K562 (cell line): ENCODE measurements at regions of chr10 and their contacts with region 1.

Region 1: GRCh38 chr10:45235798-45236231 is 79.6 kb downstream of the OR13A1 start:
- DNase-seq: no peak
- ATAC-seq: peak; percentile 23
- H3K4me3 ChIP-seq: no peak overlapping the region
- H3K27ac ChIP-seq: no peak overlapping the region
- H3K4me1 ChIP-seq: peaks cover 0 to 3% of the 10 kb centered on the region in 2 experiments; a peak in 2 of 5 replicates
- H3K27me3 ChIP-seq: no peaks in the 10 kb centered on the region
- CTCF ChIP-seq: no peak
- EP300 ChIP-seq: no peak
- POLR2A ChIP-seq: no peak
- RAD21 ChIP-seq: no peak

Region 2: GRCh38 chr10:45008524-45009161 is 227.2 kb before region 1 on chr10:
- CTCF ChIA-PET with region 1: interaction called, 11 read pairs
- POLR2A ChIA-PET with region 1: no interaction called
- in situ Hi-C with region 1: no loop called
- intact Hi-C with region 1: loop called (anchors 2 kb)
- DNase-seq: peak; percentile 68 to 87 (median 72)
- ATAC-seq: peak; percentile 95
- H3K4me3 ChIP-seq: no peak overlapping the region
- H3K27ac ChIP-seq: no peak overlapping the region
- H3K4me1 ChIP-seq: 0 out of 5 replicates have a peak, but pooled peaks cover 0 to 2% of the 10 kb centered on the region in 2 experiments
- H3K27me3 ChIP-seq: no peaks in the 10 kb centered on the region
- CTCF ChIP-seq: peak; percentile 90 to 99 (median 93)
- EP300 ChIP-seq: 0 out of 2 replicates have a peak, but pooled peaks have one; percentile 20
- POLR2A ChIP-seq: no peak
- RAD21 ChIP-seq: peak; percentile 93 to 95

Region 3: DNA sequence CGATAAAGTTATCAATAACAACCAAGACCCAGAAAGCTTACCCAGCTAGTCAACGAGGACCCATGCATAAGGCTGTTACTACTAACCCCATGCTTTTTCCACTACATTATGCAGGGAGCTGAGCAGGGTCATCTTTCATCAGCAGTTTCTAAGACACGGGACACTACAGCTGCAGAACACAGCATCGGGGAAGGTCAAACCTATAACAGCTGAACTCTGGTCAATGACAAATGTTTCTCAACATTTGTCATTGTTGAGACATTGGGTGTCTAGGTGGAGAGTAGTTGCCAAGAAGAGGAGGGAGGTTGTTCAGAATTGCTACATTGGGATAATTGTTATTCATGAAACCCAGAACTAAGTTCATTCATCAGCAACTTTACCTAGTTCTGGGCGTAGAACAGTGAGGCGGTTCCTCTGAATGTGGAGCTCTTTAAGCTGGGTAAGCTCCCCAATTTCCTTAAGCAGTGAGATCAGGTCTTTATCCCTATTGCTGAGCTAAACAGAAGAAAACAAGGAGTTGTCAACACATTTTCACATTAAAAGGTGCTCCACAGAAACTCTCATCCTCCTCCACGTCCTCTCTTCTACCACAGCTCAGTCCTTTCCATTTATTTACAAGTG is 129.5 kb before region 1 on chr10:
- CTCF ChIA-PET with region 1: no interaction called
- POLR2A ChIA-PET with region 1: no interaction called
- in situ Hi-C with region 1: no loop called
- intact Hi-C with region 1: no loop called
- DNase-seq: no peak
- ATAC-seq: no peak
- H3K4me3 ChIP-seq: no peak overlapping the region
- H3K27ac ChIP-seq: no peak overlapping the region
- H3K4me1 ChIP-seq: no peaks in the 10 kb centered on the region
- H3K27me3 ChIP-seq: peaks cover 0 to 12% of the 10 kb centered on the region in 2 experiments; a peak in 3 of 5 replicates
- CTCF ChIP-seq: no peak
- EP300 ChIP-seq: no peak
- POLR2A ChIP-seq: no peak
- RAD21 ChIP-seq: no peak

Region 4: DNA sequence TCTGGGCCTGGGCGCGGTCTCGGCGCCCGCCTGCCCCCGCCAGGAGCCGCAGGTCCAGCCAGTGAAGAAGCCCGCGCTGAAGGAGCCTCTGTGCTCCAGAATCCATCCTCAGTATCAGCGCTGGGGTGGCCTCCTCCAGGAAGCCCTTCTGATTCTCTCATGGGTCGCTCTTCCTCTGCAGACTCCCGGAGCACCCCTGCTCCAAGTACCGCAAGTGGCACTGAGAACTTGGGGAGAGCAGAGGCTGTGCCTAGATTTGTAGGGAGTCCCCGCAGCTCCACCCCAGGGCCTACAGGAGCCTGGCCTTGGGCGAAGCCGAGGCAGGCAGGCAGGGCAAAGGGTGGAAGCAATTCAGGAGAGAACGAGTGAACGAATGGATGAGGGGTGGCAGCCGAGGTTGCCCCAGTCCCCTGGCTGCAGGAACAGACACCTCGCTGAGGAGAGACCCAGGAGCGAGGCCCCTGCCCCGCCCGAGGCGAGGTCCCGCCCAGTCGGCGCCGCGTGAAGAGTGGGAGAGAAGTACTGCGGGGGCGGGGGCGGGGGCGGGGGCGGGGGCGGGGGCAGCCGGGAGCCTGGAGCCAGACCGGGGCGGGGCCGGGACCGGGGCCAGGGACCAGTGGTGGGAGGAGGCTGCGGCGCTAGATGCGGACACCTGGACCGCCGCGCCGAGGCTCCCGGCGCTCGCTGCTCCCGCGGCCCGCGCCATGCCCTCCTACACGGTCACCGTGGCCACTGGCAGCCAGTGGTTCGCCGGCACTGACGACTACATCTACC is 137.9 kb after region 1 on chr10 and contains the start of gene ALOX5:
- CTCF ChIA-PET with region 1: no interaction called
- POLR2A ChIA-PET with region 1: no interaction called
- in situ Hi-C with region 1: no loop called
- intact Hi-C with region 1: no loop called
- DNase-seq: peak; percentile 89 to 97 (median 95)
- ATAC-seq: peak; percentile 92
- H3K4me3 ChIP-seq: peak within 1 kb of the TSS; percentile 40
- H3K27ac ChIP-seq: no peak within 1 kb of the TSS
- H3K4me1 ChIP-seq: peaks cover 30 to 34% of the 10 kb centered on the region in 2 experiments
- H3K27me3 ChIP-seq: peaks cover 0 to 14% of the 10 kb centered on the region in 2 experiments; a peak in 3 of 5 replicates
- CTCF ChIP-seq: no peak
- EP300 ChIP-seq: no peak
- POLR2A ChIP-seq: 0 out of 2 replicates have a peak, but pooled peaks have one; percentile 37
- RAD21 ChIP-seq: 0 out of 4 replicates have a peak, but pooled peaks of 1 of the 2 experiments have one; percentile 10
- polyA plus RNA-seq, gene ALOX5: 0.10 to 0.13 TPM